MCF 10A (cell line): ENCODE measurements at regions of chr2 and their contacts with region 1.

Region 1: DNA sequence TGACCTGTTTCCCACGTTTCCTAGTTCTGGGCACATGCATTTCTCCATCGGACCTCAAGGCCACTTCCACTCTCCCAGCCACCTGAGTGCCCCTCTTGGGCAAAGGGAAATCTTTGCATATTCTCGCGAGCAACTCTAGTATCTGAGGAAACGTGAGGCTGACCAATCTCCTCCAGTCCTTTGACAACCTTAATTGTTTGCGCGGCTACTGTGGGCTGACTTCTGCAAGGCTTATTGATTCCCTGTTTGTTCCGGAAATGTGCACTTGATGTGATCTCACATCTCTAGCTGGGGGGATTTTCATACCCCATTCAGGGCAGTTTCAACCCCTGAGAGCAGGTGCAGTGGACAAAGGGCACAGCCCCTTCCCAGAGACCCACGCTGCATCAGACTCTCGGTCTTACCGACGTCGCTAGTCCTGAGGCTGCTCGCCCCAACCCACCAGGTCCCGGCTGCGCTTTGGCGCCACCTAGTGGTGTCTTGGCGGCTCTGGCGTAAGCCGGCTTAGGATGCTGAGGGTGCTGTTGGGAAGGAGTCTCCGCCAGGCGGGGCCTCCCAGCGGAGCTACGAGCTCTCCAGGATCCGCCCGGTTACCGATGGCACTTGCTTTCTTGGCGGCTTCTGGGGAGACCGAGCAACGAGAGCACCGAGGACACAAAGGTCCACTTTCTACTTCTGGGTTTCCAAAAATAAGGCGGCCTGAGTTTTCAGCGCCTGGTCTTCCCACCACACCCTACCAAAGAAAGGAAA is 24.8 kb upstream of the SPR start:
- DNase-seq: peak; percentile 89
- H3K4me3 Mint-ChIP-seq: peak overlapping the region; percentile 41
- H3K27ac Mint-ChIP-seq: no peak overlapping the region
- H3K4me1 Mint-ChIP-seq: peaks cover 7% of the 10 kb centered on the region
- H3K27me3 Mint-ChIP-seq: peaks cover 28% of the 10 kb centered on the region
- CTCF ChIP-seq: peak; percentile 87

Region 2: GRCh38 chr2:71826826-71827523 is 1035.4 kb before region 1 on chr2:
- CTCF ChIA-PET with region 1: no interaction called
- POLR2A ChIA-PET with region 1: no interaction called
- intact Hi-C with region 1: no loop called
- DNase-seq: no peak
- H3K4me3 Mint-ChIP-seq: no peak overlapping the region
- H3K27ac Mint-ChIP-seq: no peak overlapping the region
- H3K4me1 Mint-ChIP-seq: peaks cover 10% of the 10 kb centered on the region
- H3K27me3 Mint-ChIP-seq: peaks cover 17% of the 10 kb centered on the region
- CTCF ChIP-seq: no peak

Region 3: DNA sequence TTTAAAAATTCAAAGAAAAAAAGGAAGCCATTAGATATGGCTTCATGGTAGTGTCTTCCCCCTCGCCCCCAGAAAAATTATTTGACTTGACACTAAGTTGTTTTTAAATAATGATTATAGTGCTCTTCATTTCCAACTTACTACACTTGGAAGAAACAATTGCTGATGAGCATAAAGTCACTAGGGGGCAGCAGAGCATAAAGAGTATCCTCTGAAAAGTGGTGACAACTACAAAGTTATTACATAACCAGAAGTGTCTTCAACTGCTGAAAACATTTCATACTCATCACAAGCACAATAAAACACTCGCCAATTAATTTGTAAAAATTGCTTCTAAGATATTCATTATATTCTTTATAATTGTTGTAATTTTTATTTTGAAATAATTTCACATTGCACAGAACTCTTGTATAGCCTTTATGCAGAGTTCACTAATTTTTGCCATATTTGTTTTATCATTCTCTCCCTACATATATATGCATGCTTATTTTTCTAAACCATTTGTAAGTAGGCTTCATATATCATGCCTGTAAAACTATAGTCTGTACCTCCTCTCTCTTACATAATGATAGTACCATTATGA is 91.4 kb before region 1 on chr2:
- CTCF ChIA-PET with region 1: interaction called, 60 read pairs
- POLR2A ChIA-PET with region 1: interaction called, 8 read pairs
- intact Hi-C with region 1: loop called (anchors 1 kb)
- DNase-seq: peak; percentile 83
- H3K4me3 Mint-ChIP-seq: no peak overlapping the region
- H3K27ac Mint-ChIP-seq: no peak overlapping the region
- H3K4me1 Mint-ChIP-seq: no peaks in the 10 kb centered on the region
- H3K27me3 Mint-ChIP-seq: no peaks in the 10 kb centered on the region
- CTCF ChIP-seq: peak; percentile 73

Region 4: DNA sequence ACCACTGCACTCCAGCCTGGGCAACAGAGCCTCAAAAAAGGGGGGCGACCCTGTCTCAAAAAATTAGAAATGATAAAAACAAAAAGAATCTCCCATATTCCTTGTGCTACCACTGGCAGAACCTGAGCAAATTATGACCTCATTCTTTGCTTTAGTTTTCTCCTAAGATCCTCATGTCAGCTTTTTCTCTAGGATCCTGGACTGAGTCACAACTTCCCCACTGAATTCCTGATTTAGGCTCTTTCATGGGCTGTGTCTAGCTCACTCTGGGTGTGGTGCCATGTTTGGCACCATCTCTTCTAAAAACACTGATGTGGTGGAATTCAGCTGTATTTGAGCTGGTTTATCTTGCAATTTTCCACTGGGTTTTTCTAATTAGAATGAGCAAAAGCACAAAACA is 73.7 kb before region 1 on chr2:
- CTCF ChIA-PET with region 1: interaction called, 26 read pairs
- POLR2A ChIA-PET with region 1: interaction called, 3 read pairs
- intact Hi-C with region 1: no loop called
- DNase-seq: peak; percentile 26
- H3K4me3 Mint-ChIP-seq: no peak overlapping the region
- H3K27ac Mint-ChIP-seq: peak overlapping the region; percentile 5
- H3K4me1 Mint-ChIP-seq: peaks cover 12% of the 10 kb centered on the region
- H3K27me3 Mint-ChIP-seq: no peaks in the 10 kb centered on the region
- CTCF ChIP-seq: no peak

Region 5: GRCh38 chr2:72813841-72814240 is 48.6 kb before region 1 on chr2:
- CTCF ChIA-PET with region 1: interaction called, 52 read pairs
- POLR2A ChIA-PET with region 1: interaction called, 3 read pairs
- intact Hi-C with region 1: loop called (anchors 1 kb)
- DNase-seq: no peak
- H3K4me3 Mint-ChIP-seq: no peak overlapping the region
- H3K27ac Mint-ChIP-seq: peak overlapping the region; percentile 8
- H3K4me1 Mint-ChIP-seq: peaks cover 20% of the 10 kb centered on the region
- H3K27me3 Mint-ChIP-seq: no peaks in the 10 kb centered on the region
- CTCF ChIP-seq: no peak

Region 6: GRCh38 chr2:72833084-72833709 is 29.2 kb before region 1 on chr2:
- CTCF ChIA-PET with region 1: interaction called, 19 read pairs
- POLR2A ChIA-PET with region 1: interaction called, 3 read pairs
- intact Hi-C with region 1: no loop called
- DNase-seq: no peak
- H3K4me3 Mint-ChIP-seq: no peak overlapping the region
- H3K27ac Mint-ChIP-seq: no peak overlapping the region
- H3K4me1 Mint-ChIP-seq: peaks cover 2% of the 10 kb centered on the region
- H3K27me3 Mint-ChIP-seq: no peaks in the 10 kb centered on the region
- CTCF ChIP-seq: no peak

Region 7: DNA sequence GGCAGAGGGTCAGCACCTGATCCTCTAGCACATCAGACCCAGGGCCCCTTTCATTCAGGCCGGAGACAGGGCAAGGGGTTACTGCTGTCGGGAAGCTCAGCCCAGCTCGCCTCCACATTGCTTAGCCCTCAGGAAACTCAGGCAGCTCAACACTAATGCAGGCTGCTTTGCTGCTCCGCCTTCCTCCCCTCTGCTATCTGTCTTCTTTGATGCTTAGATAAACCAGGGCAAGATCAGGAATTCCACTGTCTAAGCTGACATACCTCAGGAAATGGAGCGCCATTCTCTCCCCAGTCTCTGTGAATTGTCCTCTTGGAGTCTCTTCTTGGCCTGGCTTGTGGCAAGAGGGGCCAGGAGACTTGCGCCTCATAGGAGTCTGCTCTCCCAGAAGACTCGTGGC is 11.1 kb before region 1 on chr2:
- CTCF ChIA-PET with region 1: interaction called, 12 read pairs
- POLR2A ChIA-PET with region 1: interaction called, 4 read pairs
- intact Hi-C with region 1: no loop called
- DNase-seq: no peak
- H3K4me3 Mint-ChIP-seq: no peak overlapping the region
- H3K27ac Mint-ChIP-seq: no peak overlapping the region
- H3K4me1 Mint-ChIP-seq: no peaks in the 10 kb centered on the region
- H3K27me3 Mint-ChIP-seq: peaks cover 17% of the 10 kb centered on the region
- CTCF ChIP-seq: no peak